Activated CD8-positive, alpha-beta T cell treated with anti-CD3 and anti-CD28 coated beads, Interleukin-2, amount 10 ng/mL, durations not matched to agents 7 days and 5 days (primary cell): ENCODE measurements at regions of chr14 and their contacts with region 1.

Region 1: DNA sequence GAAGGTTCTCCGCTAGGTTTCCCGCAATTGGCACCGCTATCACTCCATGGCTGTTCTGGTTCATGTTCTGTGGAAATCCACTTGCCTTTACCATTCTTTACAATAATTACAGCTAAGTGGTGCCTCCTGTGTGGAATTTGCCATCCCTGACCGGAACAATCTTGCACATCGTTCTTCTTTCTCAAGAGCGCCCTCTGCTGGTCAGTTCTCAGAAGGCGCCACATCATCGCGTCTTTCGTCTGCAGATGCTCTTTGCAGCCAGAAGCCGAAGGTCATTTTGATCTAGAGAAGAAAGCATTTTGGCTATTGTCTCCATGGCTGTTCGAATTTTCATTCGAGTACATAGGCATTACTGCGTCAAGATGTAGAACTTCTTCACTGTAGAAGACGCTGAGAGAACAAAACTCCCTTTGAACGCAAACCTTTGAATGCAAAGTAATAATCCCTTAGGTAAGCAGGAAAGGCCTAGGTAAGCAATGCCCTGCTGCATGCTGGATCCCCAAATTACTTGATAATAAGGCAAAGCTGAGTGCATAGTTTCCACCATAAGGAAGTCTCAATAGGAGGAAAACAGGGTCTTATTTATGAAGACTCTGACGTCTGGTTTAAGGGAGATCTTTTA is 10.1 kb upstream of the RTRAF start:
- DNase-seq: peak; percentile 89
- ATAC-seq: peak; percentile 77
- H3K4me3 Mint-ChIP-seq: no peak overlapping the region
- H3K27ac Mint-ChIP-seq: no peak overlapping the region
- H3K4me1 Mint-ChIP-seq: peaks cover 18% of the 10 kb centered on the region
- H3K27me3 Mint-ChIP-seq: no peaks in the 10 kb centered on the region

Region 2: DNA sequence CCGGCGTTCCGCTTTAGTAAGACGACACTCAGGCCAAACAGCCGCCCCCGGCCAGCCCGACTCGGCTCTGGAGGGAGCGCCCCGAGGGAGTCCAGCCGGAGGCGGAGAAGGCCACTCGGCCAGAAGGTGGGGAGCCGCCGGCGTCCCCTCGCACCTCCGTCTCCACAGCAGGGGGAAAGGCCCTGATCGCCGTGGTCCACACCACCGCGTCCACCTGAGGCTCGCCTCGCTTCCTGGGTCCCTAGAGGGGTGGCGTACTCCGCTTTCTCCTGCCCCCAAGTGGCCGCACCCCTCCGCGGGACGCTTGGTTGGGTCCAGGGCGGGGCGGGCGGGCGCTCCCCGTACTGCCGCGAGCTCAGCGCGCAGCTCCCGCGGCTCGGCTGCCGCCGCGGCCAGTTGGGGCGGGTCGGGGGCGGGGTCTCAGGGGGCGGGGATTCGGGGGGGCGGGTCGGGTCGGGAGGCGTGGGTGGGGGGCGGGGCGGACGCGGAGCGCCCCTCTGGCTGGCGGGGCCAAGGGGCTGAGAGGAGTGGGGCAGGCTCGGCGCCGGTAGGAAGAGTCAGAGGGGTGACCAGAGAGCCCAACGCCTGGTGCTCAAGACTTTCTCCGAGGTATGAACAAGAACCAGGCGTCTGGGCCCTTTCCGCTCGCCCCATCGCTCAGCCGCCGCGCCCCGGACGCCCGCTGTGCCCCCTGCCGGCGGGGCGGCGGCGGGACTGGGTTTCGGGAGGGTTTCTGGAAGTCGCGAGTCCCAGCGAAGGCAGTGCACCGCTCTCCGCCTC is 327.6 kb before region 1 on chr14 and contains the start of gene FRMD6:
- CTCF ChIA-PET with region 1: interaction called, 14 read pairs
- POLR2A ChIA-PET with region 1: no interaction called
- DNase-seq: peak; percentile 87
- ATAC-seq: peak; percentile 85
- H3K4me3 Mint-ChIP-seq: peak within 1 kb of the TSS; percentile 81
- H3K27ac Mint-ChIP-seq: peak within 1 kb of the TSS; percentile 83
- H3K4me1 Mint-ChIP-seq: peaks cover 25% of the 10 kb centered on the region
- H3K27me3 Mint-ChIP-seq: peaks cover 18% of the 10 kb centered on the region
- total RNA-seq, gene FRMD6: 3.2 to 3.5 TPM

Region 3: DNA sequence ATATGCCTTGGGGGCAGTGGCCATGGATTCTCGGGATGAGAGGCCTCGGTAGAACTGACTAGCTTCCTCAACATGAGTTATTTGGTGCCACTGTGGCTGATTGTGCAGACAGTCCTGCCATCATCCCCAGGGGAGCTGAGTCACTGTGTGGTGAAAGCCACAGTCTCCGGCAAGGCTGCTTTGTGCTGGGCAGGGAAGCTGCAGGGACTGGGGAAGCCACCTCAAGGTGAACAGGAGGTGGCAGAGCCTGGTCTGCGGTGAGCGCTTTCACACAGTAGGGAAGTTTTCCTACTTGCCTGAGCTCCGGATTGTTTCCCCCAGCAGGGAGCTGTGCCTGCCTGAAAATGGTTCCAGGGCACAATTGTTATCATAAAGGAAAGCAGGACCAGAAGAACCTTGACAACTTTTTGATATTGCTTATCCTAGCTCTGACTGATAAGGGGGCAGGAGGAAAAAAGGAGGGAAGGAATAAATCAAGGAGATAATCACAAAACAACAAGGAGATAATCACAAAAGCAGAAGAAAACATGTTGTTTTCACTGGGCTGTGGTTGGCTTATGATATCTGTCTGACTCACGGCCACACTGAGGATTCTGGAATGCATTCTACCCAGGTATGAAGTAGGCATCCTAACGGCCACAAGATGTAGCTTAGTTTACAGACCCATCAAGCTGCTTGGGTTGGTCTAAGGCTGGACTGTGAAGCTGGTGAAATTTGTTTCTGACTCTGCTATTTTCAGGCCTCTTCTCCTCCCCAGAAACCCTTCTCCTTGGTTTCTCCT is 151.0 kb before region 1 on chr14:
- CTCF ChIA-PET with region 1: interaction called, 21 read pairs
- POLR2A ChIA-PET with region 1: no interaction called
- DNase-seq: peak; percentile 80
- ATAC-seq: peak; percentile 99
- H3K4me3 Mint-ChIP-seq: no peak overlapping the region
- H3K27ac Mint-ChIP-seq: no peak overlapping the region
- H3K4me1 Mint-ChIP-seq: no peaks in the 10 kb centered on the region
- H3K27me3 Mint-ChIP-seq: peaks cover 4% of the 10 kb centered on the region

Region 4: DNA sequence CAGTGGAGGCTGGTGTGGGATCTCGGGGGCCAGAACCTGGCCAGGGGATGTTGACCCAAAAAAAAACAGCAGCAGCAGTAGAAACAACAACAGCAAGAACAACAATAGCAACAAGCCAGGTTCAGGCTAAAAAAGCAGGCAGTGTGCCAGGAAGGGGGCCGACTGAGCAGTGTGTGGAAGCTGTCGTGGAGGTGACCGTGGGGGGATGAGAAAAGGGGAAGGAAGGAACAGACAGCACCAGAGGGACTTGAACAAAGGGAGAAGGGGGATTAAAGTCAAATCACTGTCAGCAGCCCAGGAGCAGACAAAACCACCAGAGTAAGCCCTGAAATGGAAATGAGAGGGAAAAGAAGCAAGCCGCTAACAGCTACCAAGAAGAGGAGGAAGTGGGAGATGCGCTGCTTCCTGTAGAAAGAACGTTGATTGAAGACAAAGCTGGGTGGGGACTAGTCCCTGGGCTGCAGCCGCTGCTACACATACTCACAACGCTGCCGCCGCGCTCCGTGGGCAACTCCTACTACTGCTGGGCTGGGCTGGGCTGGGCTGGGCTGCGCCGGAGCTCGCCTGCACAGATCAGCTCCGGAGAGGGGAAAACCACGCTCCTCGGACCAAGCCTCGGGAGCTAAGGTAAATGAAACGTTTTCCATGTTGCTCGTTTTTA is 118.9 kb before region 1 on chr14 and contains the start of gene GNG2:
- CTCF ChIA-PET with region 1: interaction called, 26 read pairs
- POLR2A ChIA-PET with region 1: interaction called, 6 read pairs
- DNase-seq: peak; percentile 93
- ATAC-seq: peak; percentile 97
- H3K4me3 Mint-ChIP-seq: peak within 1 kb of the TSS; percentile 96
- H3K27ac Mint-ChIP-seq: peak within 1 kb of the TSS; percentile 95
- H3K4me1 Mint-ChIP-seq: peaks cover 48% of the 10 kb centered on the region
- H3K27me3 Mint-ChIP-seq: no peaks in the 10 kb centered on the region
- total RNA-seq, gene GNG2: 293 to 302 TPM

Region 5: GRCh38 chr14:51963286-51963685 is 15.9 kb before region 1 on chr14:
- CTCF ChIA-PET with region 1: interaction called, 43 read pairs
- POLR2A ChIA-PET with region 1: no interaction called
- DNase-seq: no peak
- ATAC-seq: no peak
- H3K4me3 Mint-ChIP-seq: peak overlapping the region; percentile 29
- H3K27ac Mint-ChIP-seq: peak overlapping the region; percentile 59
- H3K4me1 Mint-ChIP-seq: peaks cover 24% of the 10 kb centered on the region
- H3K27me3 Mint-ChIP-seq: no peaks in the 10 kb centered on the region